WTC11 (cell line): ENCODE measurements at regions of chr4 and their contacts with region 1.

Region 1: DNA sequence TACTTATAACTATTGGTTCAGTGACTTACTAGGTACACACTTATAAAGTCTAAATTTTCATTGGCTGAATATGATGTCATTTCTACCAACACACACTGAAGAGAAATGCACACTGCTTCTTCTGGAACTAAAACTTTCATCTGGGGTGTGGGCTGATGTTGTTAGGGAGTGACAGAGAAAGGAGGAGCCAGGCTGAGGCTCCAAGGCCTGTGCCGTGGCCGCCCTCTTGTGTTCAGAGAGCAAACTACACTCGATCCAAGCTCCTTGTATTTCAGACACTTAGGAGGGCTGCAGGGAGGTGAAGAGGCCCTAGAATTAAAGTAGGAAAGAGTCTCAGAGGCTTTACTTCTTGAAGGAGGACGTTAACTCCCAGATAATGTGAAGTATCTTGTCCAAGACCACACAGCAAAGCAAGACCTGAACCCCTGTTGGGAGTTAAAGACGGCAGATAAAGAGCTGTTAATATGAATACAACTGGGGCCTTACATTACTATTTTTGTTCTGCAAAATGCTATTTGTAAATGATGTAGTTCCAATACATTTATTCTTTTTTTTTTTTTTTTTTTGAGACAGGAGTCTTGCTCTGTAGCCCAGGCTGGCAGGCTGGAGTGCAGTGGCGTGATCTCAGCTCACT is 137.5 kb downstream of the AFAP1 start:
- DNase-seq: peak; percentile 91
- ATAC-seq: peak; percentile 76
- H3K4me3 Mint-ChIP-seq: no peak overlapping the region
- H3K27ac Mint-ChIP-seq: peak overlapping the region; percentile 89; the same call in 1 of the 2 replicates
- H3K4me1 Mint-ChIP-seq: peaks cover 32% of the 10 kb centered on the region
- H3K27me3 Mint-ChIP-seq: no peaks in the 10 kb centered on the region
- CTCF ChIP-seq: peak; percentile 77

Region 2: GRCh38 chr4:7761720-7762119 is 40.5 kb before region 1 on chr4:
- CTCF ChIA-PET with region 1: interaction called, 78 read pairs
- POLR2A ChIA-PET with region 1: no interaction called
- DNase-seq: peak; percentile 80
- ATAC-seq: peak; percentile 91
- H3K4me3 Mint-ChIP-seq: no peak overlapping the region
- H3K27ac Mint-ChIP-seq: no peak overlapping the region
- H3K4me1 Mint-ChIP-seq: no peaks in the 10 kb centered on the region
- H3K27me3 Mint-ChIP-seq: no peaks in the 10 kb centered on the region
- CTCF ChIP-seq: peak; percentile 78

Region 3: GRCh38 chr4:7777031-7777710 is 25.0 kb before region 1 on chr4:
- CTCF ChIA-PET with region 1: interaction called, 13 read pairs
- POLR2A ChIA-PET with region 1: interaction called, 3 read pairs
- DNase-seq: no peak
- ATAC-seq: no peak
- H3K4me3 Mint-ChIP-seq: no peak overlapping the region
- H3K27ac Mint-ChIP-seq: no peak overlapping the region
- H3K4me1 Mint-ChIP-seq: peaks cover 8% of the 10 kb centered on the region
- H3K27me3 Mint-ChIP-seq: no peaks in the 10 kb centered on the region
- CTCF ChIP-seq: no peak

Region 4: GRCh38 chr4:7827991-7828720 is 25.9 kb after region 1 on chr4:
- CTCF ChIA-PET with region 1: interaction called, 34 read pairs
- POLR2A ChIA-PET with region 1: no interaction called
- DNase-seq: no peak
- ATAC-seq: peak; percentile 66; the same call in 1 of the 2 replicates
- H3K4me3 Mint-ChIP-seq: no peak overlapping the region; the same call in 1 of the 2 replicates
- H3K27ac Mint-ChIP-seq: peak overlapping the region; percentile 28
- H3K4me1 Mint-ChIP-seq: peaks cover 54% of the 10 kb centered on the region
- H3K27me3 Mint-ChIP-seq: no peaks in the 10 kb centered on the region
- CTCF ChIP-seq: no peak

Region 5: GRCh38 chr4:7850489-7850888 is 48.3 kb after region 1 on chr4:
- CTCF ChIA-PET with region 1: interaction called, 109 read pairs
- POLR2A ChIA-PET with region 1: no interaction called
- DNase-seq: peak; percentile 41
- ATAC-seq: peak; percentile 79
- H3K4me3 Mint-ChIP-seq: no peak overlapping the region
- H3K27ac Mint-ChIP-seq: peak overlapping the region; percentile 68; the same call in 1 of the 2 replicates
- H3K4me1 Mint-ChIP-seq: peaks cover 20% of the 10 kb centered on the region
- H3K27me3 Mint-ChIP-seq: no peaks in the 10 kb centered on the region
- CTCF ChIP-seq: 0 out of 2 replicates have a peak, but pooled peaks have one; percentile 19

Region 6: DNA sequence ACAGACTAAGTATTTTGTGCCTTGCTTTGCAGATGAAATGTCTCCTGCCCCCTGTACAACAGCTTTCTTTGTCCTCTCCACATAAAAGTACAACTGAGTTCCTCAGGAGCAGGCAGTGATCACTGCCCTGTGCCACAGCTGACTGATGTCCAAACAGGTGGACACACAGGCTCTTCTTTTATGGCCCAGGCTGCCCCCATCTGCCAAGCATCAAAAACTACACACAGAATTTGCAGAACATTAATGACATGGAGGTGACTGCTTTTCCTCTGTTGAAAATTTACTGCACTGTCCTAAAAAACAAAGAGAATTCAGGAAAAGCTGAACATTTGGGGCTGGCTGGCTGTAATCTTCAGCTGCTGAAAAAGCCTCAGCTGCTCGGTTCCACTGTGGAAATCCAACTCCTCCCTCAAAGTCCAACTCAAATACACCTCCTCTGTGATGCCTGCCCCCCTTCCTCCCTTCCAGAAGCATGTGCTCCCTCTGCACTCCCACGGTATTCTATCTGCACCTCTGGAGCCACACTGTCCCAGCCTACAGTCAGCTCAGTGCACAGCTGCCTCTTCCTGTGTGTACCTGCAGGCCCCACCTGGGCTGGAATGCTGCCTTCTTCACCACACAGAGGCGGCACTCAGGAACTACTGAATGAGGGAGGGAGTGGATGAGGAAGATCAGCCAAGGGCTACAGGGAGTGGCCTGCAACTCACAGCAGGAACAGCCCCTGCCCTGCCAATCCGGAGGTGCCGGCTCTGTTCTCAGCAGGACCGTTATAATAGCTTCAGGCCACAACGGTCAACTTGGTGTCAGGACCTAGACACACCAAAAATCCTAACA is 127.1 kb after region 1 on chr4:
- CTCF ChIA-PET with region 1: interaction called, 74 read pairs
- POLR2A ChIA-PET with region 1: no interaction called
- DNase-seq: peak; percentile 35
- ATAC-seq: peak; percentile 94
- H3K4me3 Mint-ChIP-seq: no peak overlapping the region
- H3K27ac Mint-ChIP-seq: peak overlapping the region; percentile 83
- H3K4me1 Mint-ChIP-seq: peaks cover 26% of the 10 kb centered on the region
- H3K27me3 Mint-ChIP-seq: no peaks in the 10 kb centered on the region
- CTCF ChIP-seq: no peak

Region 7: GRCh38 chr4:7978489-7978888 is 176.3 kb after region 1 on chr4:
- CTCF ChIA-PET with region 1: interaction called, 116 read pairs
- POLR2A ChIA-PET with region 1: no interaction called
- DNase-seq: no peak
- ATAC-seq: peak; percentile 38
- H3K4me3 Mint-ChIP-seq: no peak overlapping the region
- H3K27ac Mint-ChIP-seq: peak overlapping the region; percentile 58; the same call in 1 of the 2 replicates
- H3K4me1 Mint-ChIP-seq: peaks cover 41% of the 10 kb centered on the region
- H3K27me3 Mint-ChIP-seq: no peaks in the 10 kb centered on the region; the same call in 1 of the 2 replicates
- CTCF ChIP-seq: no peak